ENCODE measurements at regions of chr10 and their contacts with region 1.

Region 1: DNA sequence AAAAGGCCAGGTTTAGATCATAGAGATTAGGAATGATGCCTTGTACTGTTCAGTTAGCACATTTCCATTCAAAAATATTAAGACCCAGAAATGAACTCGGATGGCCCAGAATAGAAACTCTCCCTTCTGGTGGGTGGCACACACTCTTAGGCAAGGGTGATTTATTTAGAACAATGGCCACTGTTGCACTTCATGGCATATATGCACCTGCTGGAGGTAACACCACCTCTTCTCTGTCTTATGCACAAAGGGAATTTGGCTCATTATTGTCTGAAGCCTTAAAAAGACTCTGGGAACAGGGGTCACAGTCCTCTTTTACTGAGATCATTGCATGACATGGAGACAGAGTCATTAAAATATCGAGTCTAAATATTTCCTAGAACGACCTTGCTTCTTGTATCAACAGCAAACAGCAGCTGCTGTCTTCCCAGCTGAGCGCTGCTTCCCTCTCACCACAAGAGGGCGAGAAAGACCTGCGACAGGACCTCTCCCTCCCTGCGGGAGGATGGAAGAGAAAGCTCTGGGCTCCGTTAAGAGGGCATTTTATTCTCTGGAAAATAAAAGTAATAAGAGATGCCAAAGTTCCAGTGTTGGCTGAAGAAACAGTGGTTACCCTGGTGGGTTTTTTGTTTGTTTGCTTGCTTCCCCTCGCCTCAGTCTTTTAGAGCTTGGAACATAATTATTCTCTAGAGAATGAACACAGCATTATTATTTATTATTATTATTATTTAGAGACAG is 13.6 kb upstream of the BAMBI start:
- DNase-seq: peak; percentile 75
- CTCF ChIP-seq: peak; percentile 98

Region 2: GRCh38 chr10:28479425-28479865 is 184.3 kb before region 1 on chr10:
- CTCF ChIA-PET with region 1: no interaction called
- POLR2A ChIA-PET with region 1: no interaction called
- DNase-seq: no peak
- CTCF ChIP-seq: no peak

Region 3: DNA sequence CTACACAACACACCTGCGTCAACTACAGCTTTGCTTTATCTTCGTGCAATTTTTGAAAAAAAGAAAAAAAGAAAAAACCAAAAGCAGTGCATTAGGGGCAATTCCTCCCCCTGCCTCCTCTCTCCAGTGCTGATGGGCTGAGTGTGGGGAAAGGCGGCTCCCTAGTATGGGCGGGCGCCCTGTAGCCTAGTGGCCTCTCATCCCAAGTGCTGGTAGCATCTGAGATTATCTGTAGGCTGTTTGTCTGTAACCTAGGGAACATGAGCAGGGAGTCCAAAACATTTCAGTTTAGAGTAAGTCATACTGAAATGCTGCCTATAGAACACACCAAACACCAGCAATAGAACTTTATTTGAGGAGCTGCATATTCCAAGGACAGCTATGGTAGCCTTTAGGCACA is 11.0 kb before region 1 on chr10:
- CTCF ChIA-PET with region 1: interaction called, 14 read pairs
- POLR2A ChIA-PET with region 1: no interaction called
- DNase-seq: no peak
- CTCF ChIP-seq: no peak

Region 4: GRCh38 chr10:28679581-28680357 is 16.0 kb after region 1 on chr10:
- CTCF ChIA-PET with region 1: interaction called, 20 read pairs
- POLR2A ChIA-PET with region 1: no interaction called
- DNase-seq: no peak
- CTCF ChIP-seq: no peak

Region 5: GRCh38 chr10:28716748-28717147 is 53.0 kb after region 1 on chr10:
- CTCF ChIA-PET with region 1: no interaction called
- POLR2A ChIA-PET with region 1: no interaction called
- DNase-seq: no peak
- CTCF ChIP-seq: no peak

Region 6: DNA sequence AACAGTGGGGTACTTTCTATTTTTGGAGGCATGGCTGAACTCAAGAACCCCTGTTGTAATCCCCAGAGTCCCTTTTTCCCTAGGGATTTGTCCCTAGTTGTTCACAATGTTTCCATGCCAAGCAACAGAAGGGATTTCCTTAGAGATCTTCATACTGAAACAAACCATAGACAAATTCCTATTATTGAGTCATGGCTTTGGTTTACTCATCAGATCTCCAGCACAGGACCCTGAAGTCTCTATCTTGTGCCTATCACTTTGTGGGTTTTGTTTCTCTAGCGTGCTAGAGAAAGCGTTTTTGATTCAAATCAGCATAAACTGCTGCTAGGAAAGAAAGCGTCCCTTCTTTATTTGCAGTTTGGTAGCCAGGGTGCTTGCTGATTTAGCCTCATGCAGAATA is 178.6 kb after region 1 on chr10:
- CTCF ChIA-PET with region 1: no interaction called
- POLR2A ChIA-PET with region 1: no interaction called
- DNase-seq: no peak
- CTCF ChIP-seq: no peak

Region 7: GRCh38 chr10:28872587-28873165 is 208.9 kb after region 1 on chr10:
- CTCF ChIA-PET with region 1: no interaction called
- POLR2A ChIA-PET with region 1: no interaction called
- DNase-seq: no peak
- CTCF ChIP-seq: no peak

Region 8: DNA sequence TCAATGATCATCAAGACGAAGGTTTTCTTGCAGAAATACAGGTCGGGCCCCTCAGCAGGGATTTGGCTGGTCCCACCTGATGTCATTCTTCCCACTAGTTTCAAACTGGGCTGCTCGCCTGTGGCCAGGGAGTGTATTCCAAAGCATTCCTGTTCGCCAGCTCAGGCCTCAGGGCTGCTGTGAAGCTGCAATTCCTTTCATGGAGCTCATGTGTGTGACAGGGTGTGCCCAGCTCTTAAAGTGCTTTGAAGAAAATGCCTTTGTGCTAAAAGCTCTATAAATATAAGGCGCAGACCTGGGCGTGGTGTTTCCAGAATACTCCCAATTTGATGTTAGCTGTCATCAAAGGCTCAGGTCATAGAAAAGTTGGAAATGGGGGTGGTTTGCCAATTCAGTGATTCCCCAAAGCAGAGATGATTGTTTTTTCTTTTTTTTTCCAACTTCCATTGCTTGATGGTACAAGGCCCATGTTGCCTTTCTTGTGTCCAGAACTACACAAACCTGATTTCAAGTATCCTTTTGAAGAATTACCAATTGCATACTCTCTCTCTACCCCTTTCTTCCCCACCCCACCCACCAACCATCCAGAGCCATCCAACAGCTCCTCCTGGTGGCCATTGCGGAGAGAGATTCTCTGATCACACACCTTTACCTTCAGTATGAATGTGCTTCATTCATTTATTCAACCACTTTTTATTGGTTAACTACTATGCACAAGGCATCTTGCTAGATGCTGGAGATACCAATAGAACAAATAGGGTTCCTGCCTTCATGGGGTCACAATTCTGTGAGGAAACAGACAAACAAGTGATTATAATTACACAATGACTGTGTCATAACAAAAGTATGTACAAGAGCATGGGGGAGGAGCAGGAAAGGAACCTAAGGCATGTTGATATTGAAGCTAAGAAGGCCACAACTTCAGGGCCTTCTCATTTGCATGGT is 327.9 kb after region 1 on chr10:
- CTCF ChIA-PET with region 1: interaction called, 46 read pairs
- POLR2A ChIA-PET with region 1: no interaction called
- DNase-seq: peak; percentile 30
- CTCF ChIP-seq: peak; percentile 48

Region 9: DNA sequence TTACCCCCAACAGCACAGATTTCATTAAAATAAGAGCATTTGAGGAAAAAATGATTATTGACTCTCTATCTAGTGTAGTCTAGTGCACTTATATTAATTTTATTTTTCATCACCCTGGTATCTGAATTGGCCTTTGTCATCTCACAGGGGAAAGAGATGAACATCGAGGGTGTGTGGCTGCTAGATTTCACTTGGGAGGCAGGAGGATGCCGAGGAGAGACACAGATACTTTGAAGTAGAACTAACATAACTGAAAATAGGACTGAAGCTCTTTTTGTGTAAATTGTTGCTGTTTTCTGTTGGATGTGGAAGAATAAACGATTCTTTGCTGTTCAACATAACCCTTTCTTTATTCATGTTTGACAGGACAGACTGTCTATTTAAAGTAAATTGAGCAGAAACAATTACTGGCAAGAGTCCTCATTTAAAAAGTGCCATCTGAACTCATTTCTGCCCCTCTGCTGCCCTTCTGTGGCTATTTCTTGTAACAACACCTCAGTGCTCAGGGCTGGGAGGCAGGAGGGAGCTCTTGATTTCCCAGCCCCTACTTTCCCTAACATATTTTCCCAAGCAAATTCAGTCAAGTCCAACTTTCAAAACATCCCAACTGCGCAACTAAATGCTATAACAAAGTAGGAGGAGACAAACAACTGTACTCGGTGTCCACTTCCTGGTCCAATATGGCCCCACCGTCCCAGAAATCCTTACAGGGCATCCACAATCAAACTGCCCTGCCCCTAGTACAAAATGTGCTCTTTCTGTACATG is 640.7 kb after region 1 on chr10:
- CTCF ChIA-PET with region 1: interaction called, 44 read pairs
- POLR2A ChIA-PET with region 1: no interaction called
- DNase-seq: peak; percentile 60
- CTCF ChIP-seq: peak; percentile 86

Measured in GM10248 (cell line).